ENCODE measurements at regions of chr11 and their contacts with region 1.

Region 1: GRCh38 chr11:68839054-68839865 is 2.5 kb downstream of the CPT1A start:
- DNase-seq: peak; percentile 98
- H3K4me3 ChIP-seq: peak overlapping the region; percentile 66
- H3K27ac ChIP-seq: peak overlapping the region; percentile 89
- H3K4me1 ChIP-seq: peaks cover 35% of the 10 kb centered on the region
- H3K27me3 ChIP-seq: no peaks in the 10 kb centered on the region
- CTCF ChIP-seq: no peak

Region 2: GRCh38 chr11:68825571-68825970 is 13.7 kb before region 1 on chr11:
- CTCF ChIA-PET with region 1: no interaction called
- POLR2A ChIA-PET with region 1: interaction called, 17 read pairs
- intact Hi-C with region 1: no loop called
- DNase-seq: no peak
- H3K4me3 ChIP-seq: no peak overlapping the region
- H3K27ac ChIP-seq: no peak overlapping the region
- H3K4me1 ChIP-seq: no peaks in the 10 kb centered on the region
- H3K27me3 ChIP-seq: no peaks in the 10 kb centered on the region
- CTCF ChIP-seq: no peak

Region 3: GRCh38 chr11:68855205-68855981 is 16.1 kb after region 1 on chr11:
- CTCF ChIA-PET with region 1: no interaction called
- POLR2A ChIA-PET with region 1: no interaction called
- intact Hi-C with region 1: loop called (anchors 1 kb)
- DNase-seq: peak; percentile 68
- H3K4me3 ChIP-seq: peak overlapping the region; percentile 53
- H3K27ac ChIP-seq: no peak overlapping the region
- H3K4me1 ChIP-seq: peaks cover 8% of the 10 kb centered on the region
- H3K27me3 ChIP-seq: peaks cover 10% of the 10 kb centered on the region
- CTCF ChIP-seq: peak; percentile 51

Region 4: DNA sequence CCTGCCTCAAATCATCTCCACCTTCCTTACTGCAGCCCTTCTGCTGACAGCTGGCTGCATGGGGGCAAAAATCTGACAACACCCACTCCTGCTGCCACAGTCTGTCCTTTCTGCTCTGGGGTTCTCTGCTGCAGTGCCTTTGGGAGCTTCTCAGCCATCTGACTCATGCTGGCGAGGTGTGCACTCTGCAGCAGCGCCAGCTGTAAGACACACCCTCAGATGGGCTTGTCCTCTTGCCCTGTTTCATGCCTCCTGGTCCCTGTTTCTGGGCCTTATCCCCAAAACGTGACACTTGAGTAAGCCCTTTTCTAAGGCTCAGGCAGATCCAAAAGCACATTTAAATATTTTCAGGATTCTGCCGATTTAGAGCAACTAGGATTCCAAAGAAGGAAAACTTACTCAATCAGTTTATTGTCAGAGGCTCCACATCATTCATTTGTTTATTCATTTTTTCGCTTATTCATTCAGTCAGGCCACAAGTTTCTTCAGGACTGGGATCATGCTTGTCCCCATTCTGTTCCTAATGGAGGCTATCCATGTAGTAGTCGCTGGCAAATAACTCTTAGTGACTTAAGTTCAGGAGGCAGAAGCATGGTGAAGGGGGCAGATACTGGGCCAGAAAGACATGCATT is 376.6 kb after region 1 on chr11:
- CTCF ChIA-PET with region 1: no interaction called
- POLR2A ChIA-PET with region 1: no interaction called
- intact Hi-C with region 1: no loop called
- DNase-seq: no peak
- H3K4me3 ChIP-seq: no peak overlapping the region
- H3K27ac ChIP-seq: no peak overlapping the region
- H3K4me1 ChIP-seq: peaks cover 6% of the 10 kb centered on the region
- H3K27me3 ChIP-seq: no peaks in the 10 kb centered on the region
- CTCF ChIP-seq: no peak

Region 5: DNA sequence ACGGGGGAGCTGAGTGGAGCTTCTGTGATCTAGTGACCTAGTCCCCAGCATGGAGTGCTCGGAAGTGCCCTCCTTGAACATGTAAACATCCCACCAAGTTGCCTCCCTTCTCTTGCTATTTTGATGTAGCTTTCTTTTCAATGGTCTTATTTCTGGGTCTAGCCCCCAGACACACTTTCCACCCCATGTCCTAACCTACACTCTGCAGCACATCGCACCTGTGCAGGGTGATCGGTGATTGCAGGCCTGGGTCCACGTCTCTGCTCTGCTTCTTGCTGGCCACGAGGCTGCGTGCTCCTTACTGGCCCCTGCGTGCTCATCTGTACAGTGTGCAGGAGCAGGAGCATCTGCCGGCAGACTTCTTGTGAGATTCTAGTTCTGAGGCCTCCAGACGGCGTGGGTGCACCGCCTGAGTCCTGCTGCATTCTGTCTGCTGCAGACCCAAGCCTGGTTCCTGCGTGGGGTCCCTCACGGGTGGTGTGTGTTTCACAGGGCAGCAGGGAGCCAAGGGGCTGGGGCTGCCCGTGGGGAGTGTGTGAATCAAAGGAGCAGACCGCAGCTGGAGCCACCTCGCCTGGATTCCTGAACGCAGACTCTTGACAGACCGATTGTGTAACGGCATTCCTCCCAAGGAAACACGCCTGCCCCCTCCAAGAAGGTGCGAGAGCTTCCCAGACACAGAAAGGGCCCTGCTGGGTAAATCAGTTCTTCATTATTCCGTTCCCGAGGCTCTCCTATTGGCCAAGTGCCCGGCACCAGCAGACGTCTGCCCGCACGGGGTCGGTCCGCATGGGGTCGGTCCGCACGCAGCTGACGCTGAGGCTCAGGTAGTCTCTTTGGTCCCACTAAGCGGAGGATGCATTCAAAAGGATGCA is 410.3 kb after region 1 on chr11:
- CTCF ChIA-PET with region 1: no interaction called
- POLR2A ChIA-PET with region 1: no interaction called
- intact Hi-C with region 1: no loop called
- DNase-seq: no peak
- H3K4me3 ChIP-seq: no peak overlapping the region
- H3K27ac ChIP-seq: no peak overlapping the region
- H3K4me1 ChIP-seq: no peaks in the 10 kb centered on the region
- H3K27me3 ChIP-seq: no peaks in the 10 kb centered on the region
- CTCF ChIP-seq: no peak

Measured in A673 (cell line).